Mammary epithelial cell (primary cell): ENCODE measurements at regions of chr9 and their contacts with region 1.

Region 1: DNA sequence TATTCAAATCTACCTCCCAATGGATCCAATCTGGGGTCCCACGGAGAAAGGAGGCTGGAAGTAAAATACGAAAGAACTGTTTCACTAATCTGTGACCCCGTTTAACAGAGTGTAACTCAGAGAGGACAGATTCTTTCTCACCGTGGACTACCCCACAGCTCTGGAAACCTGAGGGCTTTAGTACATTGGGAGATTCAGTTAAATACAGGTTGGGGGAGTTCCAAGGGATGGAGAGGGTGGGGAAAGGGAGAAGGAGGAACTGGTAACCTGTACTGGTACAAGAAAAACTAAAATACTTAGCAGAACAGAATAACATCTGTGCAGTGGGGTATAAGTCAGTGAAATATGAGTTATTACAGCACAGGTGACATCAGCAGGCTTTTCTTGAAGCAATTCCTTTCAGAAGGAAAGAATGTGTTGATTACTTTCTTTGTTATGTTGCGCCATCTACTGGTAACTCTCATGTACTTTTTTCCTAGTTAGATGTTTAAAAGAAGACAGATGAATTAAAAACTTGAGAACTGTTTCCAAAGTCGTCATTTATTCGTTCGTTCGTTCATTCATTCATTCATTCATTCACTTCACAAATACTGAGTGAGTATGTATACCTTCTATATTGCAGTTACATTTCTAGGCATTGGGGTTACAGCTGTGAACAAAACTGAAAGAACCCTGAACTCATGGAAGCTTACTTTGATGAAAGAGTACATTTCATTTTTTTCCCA is 30.0 kb upstream of the STOM start:
- DNase-seq: peak; percentile 69
- H3K4me3 ChIP-seq: no peak overlapping the region
- H3K27ac ChIP-seq: peak overlapping the region; percentile 81
- H3K4me1 ChIP-seq: peaks cover 26% of the 10 kb centered on the region
- H3K27me3 ChIP-seq: no peaks in the 10 kb centered on the region
- CTCF ChIP-seq: peak; percentile 37 to 49

Region 2: GRCh38 chr9:120175031-120175430 is 1225.0 kb before region 1 on chr9:
- CTCF ChIA-PET with region 1: no interaction called
- dilution Hi-C with region 1: no loop called
- in situ Hi-C with region 1: no loop called
- intact Hi-C with region 1: no loop called
- DNase-seq: no peak
- H3K4me3 ChIP-seq: no peak overlapping the region
- H3K27ac ChIP-seq: no peak overlapping the region
- H3K4me1 ChIP-seq: no peaks in the 10 kb centered on the region
- H3K27me3 ChIP-seq: no peaks in the 10 kb centered on the region
- CTCF ChIP-seq: no peak

Region 3: DNA sequence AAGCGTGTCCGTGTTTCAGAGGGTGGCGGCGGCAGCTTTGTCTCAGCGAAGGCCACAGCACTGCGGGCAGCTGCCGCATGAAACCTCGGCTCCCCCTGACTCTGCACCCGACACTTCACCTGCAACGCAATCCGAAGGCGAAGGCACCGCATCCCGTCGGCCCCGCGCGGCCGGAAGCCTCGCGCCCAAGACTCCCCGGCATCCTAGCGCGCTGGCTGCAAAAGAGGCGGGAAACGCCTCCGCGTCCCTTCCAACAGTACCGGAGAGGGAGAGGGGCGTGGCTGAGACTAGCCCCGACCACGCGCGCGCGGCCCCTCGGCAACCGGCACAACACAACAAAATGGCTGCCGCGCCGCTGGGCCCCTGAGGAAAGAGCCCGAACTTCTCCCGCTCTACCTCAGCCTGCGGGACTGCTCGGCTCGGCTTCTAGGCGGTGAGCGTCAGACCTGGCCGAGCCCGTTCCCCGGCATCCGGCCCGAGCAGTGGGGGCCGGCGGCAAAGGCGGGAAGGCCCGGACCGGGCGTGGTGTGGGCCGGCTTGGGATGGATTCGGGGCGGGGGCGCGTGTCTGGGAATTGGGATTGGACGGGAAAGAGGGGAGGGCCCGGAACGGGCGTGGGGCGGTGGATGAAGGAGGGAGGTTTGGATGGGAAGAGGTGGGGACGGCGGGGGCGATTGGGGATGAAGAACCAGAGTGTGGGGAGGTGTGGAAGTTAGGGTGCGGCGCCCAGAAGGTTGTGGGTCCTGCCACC is 325.2 kb before region 1 on chr9 and contains the start of gene CNTRL:
- CTCF ChIA-PET with region 1: no interaction called
- dilution Hi-C with region 1: no loop called
- in situ Hi-C with region 1: no loop called
- intact Hi-C with region 1: loop called (anchors 10 kb)
- DNase-seq: peak; percentile 89
- H3K4me3 ChIP-seq: peak within 1 kb of the TSS; percentile 57 to 92 (median 69)
- H3K27ac ChIP-seq: peak within 1 kb of the TSS; percentile 86
- H3K4me1 ChIP-seq: peaks cover 28% of the 10 kb centered on the region
- H3K27me3 ChIP-seq: no peaks in the 10 kb centered on the region
- CTCF ChIP-seq: no peak
- total RNA-seq, gene CNTRL: 7.2 to 15.0 TPM

Region 4: DNA sequence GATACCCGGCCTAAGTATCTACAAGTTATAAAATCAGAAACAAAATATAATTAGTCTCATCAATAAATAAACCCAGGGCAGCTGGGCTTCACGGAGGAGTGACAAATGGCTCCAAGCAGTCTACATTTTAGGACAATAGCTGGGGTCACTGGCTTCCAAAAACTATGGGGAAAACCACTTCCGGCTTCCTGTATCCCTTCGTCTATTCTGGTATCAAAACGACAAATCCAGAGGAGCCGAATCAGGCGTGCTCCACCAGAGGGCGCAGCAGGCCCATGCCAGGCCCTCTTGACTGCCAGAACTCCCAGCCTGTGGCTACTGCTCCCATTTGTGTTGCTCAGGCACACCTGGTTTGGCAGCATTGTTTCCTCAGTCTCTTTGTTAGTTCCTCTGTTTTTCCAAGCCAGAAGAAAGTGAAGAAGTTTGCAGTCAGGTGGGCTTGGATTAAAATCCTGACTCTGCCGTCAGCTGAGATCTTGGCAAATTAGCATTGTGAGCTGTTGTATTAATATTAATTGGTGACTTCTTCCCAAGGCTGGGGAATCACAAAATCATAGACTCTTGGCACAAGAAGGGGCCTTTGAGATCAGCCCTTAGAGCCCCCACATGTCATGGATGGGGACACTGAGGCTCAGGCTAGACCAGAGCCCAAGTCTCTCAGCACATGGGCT is 186.8 kb before region 1 on chr9:
- CTCF ChIA-PET with region 1: interaction called, 6 read pairs
- dilution Hi-C with region 1: loop called (anchors 25 kb)
- in situ Hi-C with region 1: loop called (anchors 5 to 10 kb)
- intact Hi-C with region 1: loop called (anchors 1 kb)
- DNase-seq: peak; percentile 81
- H3K4me3 ChIP-seq: no peak overlapping the region
- H3K27ac ChIP-seq: no peak overlapping the region
- H3K4me1 ChIP-seq: peaks cover 10% of the 10 kb centered on the region
- H3K27me3 ChIP-seq: no peaks in the 10 kb centered on the region
- CTCF ChIP-seq: peak; percentile 97 to 99

Region 5: DNA sequence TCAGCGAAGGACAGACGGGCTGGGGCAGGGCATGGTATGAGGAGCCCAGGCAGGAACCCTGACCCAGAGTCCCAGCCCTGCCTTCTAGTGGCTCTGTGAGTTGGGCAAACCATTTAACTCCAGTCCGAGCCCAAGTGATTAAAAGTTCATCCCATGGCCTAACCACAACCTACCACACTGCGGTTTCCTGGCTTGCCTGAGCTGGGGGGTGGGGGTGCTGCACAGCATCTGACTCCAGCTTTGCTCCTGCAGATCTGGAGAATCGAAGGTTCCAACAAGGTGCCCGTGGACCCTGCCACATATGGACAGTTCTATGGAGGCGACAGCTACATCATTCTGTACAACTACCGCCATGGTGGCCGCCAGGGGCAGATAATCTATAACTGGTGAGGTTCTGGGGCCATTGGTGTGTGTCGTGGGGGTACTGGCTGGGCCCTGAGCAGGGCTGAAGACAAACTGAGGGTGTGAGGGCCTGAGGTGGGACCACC is 79.0 kb before region 1 on chr9:
- CTCF ChIA-PET with region 1: interaction called, 19 read pairs
- dilution Hi-C with region 1: no loop called
- in situ Hi-C with region 1: loop called (anchors 5 kb)
- intact Hi-C with region 1: loop called (anchors 1 kb)
- DNase-seq: no peak
- H3K4me3 ChIP-seq: no peak overlapping the region
- H3K27ac ChIP-seq: no peak overlapping the region
- H3K4me1 ChIP-seq: peaks cover 20% of the 10 kb centered on the region
- H3K27me3 ChIP-seq: no peaks in the 10 kb centered on the region
- CTCF ChIP-seq: no peak

Region 6: GRCh38 chr9:121360601-121361374 is 39.3 kb before region 1 on chr9:
- CTCF ChIA-PET with region 1: no interaction called
- dilution Hi-C with region 1: no loop called
- in situ Hi-C with region 1: no loop called
- intact Hi-C with region 1: loop called (anchors 5 kb)
- DNase-seq: peak; percentile 51
- H3K4me3 ChIP-seq: no peak overlapping the region
- H3K27ac ChIP-seq: peak overlapping the region; percentile 52
- H3K4me1 ChIP-seq: peaks cover 39% of the 10 kb centered on the region
- H3K27me3 ChIP-seq: no peaks in the 10 kb centered on the region
- CTCF ChIP-seq: no peak

Region 7: GRCh38 chr9:121529237-121529987 is 129.4 kb after region 1 on chr9:
- CTCF ChIA-PET with region 1: no interaction called
- dilution Hi-C with region 1: loop called (anchors 10 kb)
- in situ Hi-C with region 1: no loop called
- intact Hi-C with region 1: no loop called
- DNase-seq: peak; percentile 77
- H3K4me3 ChIP-seq: no peak overlapping the region
- H3K27ac ChIP-seq: no peak overlapping the region
- H3K4me1 ChIP-seq: peaks cover 6% of the 10 kb centered on the region
- H3K27me3 ChIP-seq: no peaks in the 10 kb centered on the region
- CTCF ChIP-seq: no peak